ENCODE measurements at regions of chr14 and their contacts with region 1.

Region 1: DNA sequence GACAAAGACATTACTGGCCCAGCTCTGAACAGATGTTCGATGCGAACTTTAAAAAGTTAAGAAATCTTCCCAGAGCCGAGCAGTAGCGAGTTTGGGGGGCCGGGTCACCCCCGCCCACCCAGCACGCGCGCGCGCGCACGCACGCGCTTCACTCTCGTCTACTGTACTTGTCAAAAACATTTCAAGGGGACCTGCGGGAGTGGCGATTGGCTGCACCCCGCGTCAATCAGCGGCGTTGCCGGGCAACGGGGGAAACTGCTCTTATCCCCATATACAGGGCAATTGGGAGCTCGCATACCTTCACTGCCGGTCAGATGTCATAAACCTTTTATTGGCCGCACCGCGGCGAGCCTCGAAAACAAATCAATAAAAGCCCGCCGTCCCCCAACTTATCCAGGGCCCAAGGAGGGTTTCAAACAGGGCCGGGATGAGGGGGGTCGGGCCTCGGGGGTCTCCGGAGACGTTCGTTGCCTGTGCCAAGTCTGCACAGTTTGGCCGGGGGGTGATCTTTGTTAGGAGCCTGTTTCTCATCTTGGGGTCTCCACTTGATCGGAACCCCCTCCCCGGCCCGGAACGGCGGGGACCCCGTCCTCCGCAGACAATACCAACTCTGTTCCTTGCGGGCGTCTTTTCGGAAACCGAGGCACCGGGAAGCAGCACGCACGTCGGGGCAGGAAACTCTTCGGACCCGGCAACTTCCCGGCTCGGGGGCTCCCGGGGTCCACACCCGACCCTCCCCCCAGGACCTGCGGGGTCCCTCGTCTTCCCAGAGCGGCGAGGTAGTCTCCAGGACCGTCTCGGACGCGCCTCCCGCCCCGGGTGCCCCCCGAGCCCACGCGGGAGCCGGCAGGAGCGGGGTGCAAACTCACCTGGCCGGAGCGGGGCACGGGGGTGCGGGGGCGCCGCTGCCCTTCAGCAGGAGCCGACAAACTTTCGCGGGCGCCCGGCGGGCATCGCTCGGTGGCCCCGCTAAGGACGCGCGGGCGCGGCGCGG is 734 bp downstream of the FOXN3 start:
- DNase-seq: peak; percentile 99
- H3K4me3 Mint-ChIP-seq: peak overlapping the region; percentile 93
- H3K27ac Mint-ChIP-seq: peak overlapping the region; percentile 88
- H3K4me1 Mint-ChIP-seq: peaks cover 48% of the 10 kb centered on the region
- H3K27me3 Mint-ChIP-seq: no peaks in the 10 kb centered on the region

Region 2: GRCh38 chr14:89040460-89041259 is 375.6 kb before region 1 on chr14:
- intact Hi-C with region 1: loop called (anchors 5 kb)
- DNase-seq: peak; percentile 68
- H3K4me3 Mint-ChIP-seq: peak overlapping the region; percentile 66
- H3K27ac Mint-ChIP-seq: no peak overlapping the region
- H3K4me1 Mint-ChIP-seq: peaks cover 1% of the 10 kb centered on the region
- H3K27me3 Mint-ChIP-seq: peaks cover 34% of the 10 kb centered on the region

Region 3: DNA sequence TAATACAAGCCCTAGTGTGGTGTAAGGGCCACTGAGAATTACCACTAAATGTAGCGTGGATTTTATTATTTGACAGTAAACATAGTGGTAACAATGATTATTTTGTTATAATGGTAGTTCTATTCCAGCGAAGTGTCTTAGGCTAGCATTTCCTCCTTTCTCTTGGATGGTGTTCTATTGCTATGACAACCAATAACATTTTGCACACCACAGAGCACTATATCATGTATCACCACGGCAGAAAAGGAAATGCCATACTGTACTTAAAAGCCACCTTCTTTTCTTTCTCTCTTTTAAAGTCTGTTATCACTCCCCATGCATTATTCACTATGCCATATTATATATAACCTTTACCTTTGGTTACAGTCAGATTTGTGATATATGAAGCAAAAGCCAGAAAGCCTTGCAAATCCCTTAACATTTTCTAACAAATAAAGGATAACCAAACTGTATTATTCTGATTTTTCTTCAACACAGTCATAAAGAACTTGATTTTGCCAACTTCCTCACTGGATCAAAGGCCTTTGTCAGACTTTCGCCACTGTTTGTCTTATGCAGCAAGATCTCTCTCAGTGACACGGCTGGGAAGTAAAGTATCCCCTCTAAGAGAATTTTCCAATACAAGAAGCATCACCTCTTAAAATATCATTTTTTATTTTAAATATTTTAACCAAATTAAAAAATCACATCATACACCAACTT is 195.0 kb before region 1 on chr14:
- intact Hi-C with region 1: loop called (anchors 5 kb)
- DNase-seq: no peak
- H3K4me3 Mint-ChIP-seq: no peak overlapping the region
- H3K27ac Mint-ChIP-seq: peak overlapping the region; percentile 19
- H3K4me1 Mint-ChIP-seq: peaks cover 26% of the 10 kb centered on the region
- H3K27me3 Mint-ChIP-seq: no peaks in the 10 kb centered on the region

Region 4: DNA sequence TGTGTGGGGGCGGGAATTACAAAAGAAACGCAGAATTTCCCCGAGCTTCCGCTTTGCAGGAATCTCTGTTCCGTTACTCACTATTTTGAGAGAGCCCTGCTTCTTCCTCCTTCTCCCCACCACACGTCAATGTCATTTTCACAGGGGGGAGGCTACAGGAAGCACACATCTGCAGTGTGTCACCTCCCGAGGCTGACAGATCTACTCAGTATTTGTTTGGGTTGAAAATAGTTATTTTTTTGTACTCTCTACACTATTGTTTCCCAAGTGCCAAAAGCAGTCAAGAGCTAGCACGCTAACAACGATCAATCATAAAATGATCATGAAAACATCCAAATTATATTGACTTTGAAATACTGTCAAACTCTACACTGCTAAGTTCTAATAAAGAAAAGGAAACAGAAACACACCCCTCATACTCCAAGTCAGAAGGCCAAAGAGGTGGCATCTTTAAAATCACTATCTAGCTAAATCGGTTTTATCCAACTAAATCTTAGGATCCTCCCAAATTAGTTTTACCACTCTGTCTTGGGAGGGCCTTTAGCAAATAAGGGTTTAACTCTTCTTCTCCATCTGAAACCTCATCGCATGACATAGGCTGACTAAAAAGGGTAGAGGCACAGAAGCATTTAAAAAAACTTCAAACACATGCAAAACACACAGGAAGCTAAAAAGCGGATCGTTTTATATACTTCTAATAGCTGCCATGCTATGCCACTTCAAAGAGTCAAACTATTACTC is 51.1 kb before region 1 on chr14:
- intact Hi-C with region 1: loop called (anchors 2 kb)
- DNase-seq: peak; percentile 37
- H3K4me3 Mint-ChIP-seq: peak overlapping the region; percentile 71
- H3K27ac Mint-ChIP-seq: peak overlapping the region; percentile 93
- H3K4me1 Mint-ChIP-seq: peaks cover 49% of the 10 kb centered on the region
- H3K27me3 Mint-ChIP-seq: no peaks in the 10 kb centered on the region

Region 5: DNA sequence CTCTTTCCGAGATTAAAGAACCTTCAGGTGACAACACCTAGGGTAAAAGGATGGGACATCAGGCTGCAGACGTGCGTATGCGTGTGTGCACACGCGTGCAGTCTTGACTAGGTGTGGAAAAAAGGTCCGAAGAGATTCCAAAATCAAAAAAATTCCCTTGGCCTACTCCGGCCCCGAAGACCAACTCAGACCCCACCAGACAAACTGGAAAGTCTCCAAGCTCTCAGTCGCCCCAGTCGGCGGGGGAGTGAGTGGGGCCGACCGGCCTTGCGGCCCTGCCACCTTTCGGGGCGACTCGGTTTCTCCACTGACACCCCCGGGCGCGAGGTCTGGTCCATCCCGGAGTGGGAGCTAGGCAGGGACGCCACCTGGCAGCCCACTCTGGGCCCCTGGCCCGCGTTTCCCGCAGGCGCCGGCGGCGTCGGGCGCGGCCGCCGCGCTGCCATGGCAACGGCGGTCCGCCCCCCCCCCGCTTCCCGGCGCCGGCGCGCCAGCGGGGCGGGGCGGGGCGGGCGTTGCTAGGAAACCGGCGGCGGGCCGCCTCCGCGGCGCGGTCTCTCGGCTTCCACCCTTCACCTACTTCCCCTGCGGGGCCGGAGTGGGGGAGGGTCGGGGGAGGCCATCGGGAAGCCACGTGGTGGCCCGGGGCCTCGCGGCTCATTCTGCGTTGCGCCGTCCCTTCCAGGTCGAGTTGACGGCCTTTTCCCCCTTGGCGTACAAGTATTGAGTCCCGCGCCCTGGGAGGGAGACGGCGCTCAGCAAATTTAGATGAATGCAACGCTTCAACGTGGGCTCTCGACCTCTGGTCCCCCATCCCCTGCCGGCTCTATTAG is 285.1 kb after region 1 on chr14:
- intact Hi-C with region 1: loop called (anchors 5 kb)
- DNase-seq: peak; percentile 81
- H3K4me3 Mint-ChIP-seq: peak overlapping the region; percentile 57
- H3K27ac Mint-ChIP-seq: peak overlapping the region; percentile 79
- H3K4me1 Mint-ChIP-seq: peaks cover 43% of the 10 kb centered on the region
- H3K27me3 Mint-ChIP-seq: no peaks in the 10 kb centered on the region

Region 6: GRCh38 chr14:89954070-89955028 is 538.0 kb after region 1 on chr14 and contains the start of gene EFCAB11:
- intact Hi-C with region 1: loop called (anchors 2 kb)
- DNase-seq: peak; percentile 96
- H3K4me3 Mint-ChIP-seq: peak within 1 kb of the TSS; percentile 87
- H3K27ac Mint-ChIP-seq: peak within 1 kb of the TSS; percentile 81
- H3K4me1 Mint-ChIP-seq: peaks cover 43% of the 10 kb centered on the region
- H3K27me3 Mint-ChIP-seq: no peaks in the 10 kb centered on the region
- total RNA-seq, gene EFCAB11: 7.1 and 9.0 TPM in 2 replicates

Measured in activated T-helper 2 cell treated with anti-CD3 and anti-CD28 coated beads, Interferon-gamma antibody, Interleukin-2, Interleukin-4, amounts not matched to agents 10 μg/mL and 5 μg/mL and 100 μg/mL, durations not matched to agents 14 hours and 24 hours and 36 hours (primary cell).